ENCODE measurements at regions of chr6 and their contacts with region 1.

Region 1: DNA sequence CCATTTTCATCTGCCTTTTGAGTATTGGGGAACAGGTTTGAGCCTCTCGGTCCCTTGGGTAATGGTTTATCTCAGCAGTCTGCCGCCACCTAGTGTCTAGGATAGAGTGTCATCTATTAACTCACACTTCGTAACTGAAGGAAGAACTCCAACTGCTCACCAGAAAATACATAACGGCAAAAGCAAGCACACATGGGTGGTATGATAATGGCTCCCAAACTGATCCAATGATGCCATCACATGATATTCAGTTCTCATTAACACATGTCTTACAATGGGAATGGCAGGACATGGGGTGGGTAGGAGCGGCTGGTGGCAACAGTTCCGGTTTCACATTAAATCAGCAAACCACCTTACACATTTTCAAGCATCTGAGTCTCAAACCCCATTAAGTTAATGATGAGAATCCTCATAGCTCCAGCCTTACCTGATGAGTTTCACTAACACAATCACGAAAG is 110.7 kb upstream of the PHACTR1 start:
- DNase-seq: peak in 1 of 2 donors; percentile 26
- H3K4me3 ChIP-seq: no peak overlapping the region
- H3K27ac ChIP-seq: no peak overlapping the region
- H3K4me1 ChIP-seq: peaks cover 0 to 36% (median 22%) of the 10 kb centered on the region in 4 donors
- H3K27me3 ChIP-seq: no peaks in the 10 kb centered on the region
- CTCF ChIP-seq: peak; percentile 56 to 63

Region 2: DNA sequence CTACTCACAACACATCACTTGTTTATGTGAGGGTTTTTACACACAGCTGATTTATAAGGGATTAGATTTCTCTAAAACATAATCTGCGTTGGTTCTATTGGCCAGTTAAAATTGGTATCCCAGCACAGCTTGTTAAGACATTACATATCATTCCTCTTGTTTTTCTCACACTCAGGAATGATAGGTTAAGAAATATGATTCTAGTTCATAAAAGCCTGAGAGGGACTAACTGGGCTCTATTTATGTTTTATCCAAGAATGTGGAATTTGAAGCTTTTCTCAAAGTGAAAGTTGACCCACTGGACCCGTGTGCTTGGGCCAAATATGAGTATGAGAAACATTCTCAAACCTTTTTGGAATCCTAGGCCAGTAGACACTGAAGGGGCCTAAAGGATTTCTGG is 951.0 kb before region 1 on chr6:
- intact Hi-C with region 1: loop called (anchors 5 kb)
- DNase-seq: no peak
- H3K4me3 ChIP-seq: no peak overlapping the region
- H3K27ac ChIP-seq: peak overlapping the region; percentile 31 to 36
- H3K4me1 ChIP-seq: peaks cover 0 to 26% (median 9%) of the 10 kb centered on the region in 4 donors
- H3K27me3 ChIP-seq: no peaks in the 10 kb centered on the region
- CTCF ChIP-seq: no peak

Region 3: GRCh38 chr6:12289933-12290820 is 315.7 kb before region 1 on chr6 and contains the start of gene EDN1:
- intact Hi-C with region 1: loop called (anchors 5 kb)
- DNase-seq: peak; percentile 77 to 87
- H3K4me3 ChIP-seq: peak within 1 kb of the TSS; percentile 54 to 55
- H3K27ac ChIP-seq: peak within 1 kb of the TSS; percentile 50 to 76
- H3K4me1 ChIP-seq: peaks cover 0 to 60% (median 44%) of the 10 kb centered on the region in 4 donors
- H3K27me3 ChIP-seq: no peaks in the 10 kb centered on the region
- CTCF ChIP-seq: peak; percentile 57 to 59

Region 4: DNA sequence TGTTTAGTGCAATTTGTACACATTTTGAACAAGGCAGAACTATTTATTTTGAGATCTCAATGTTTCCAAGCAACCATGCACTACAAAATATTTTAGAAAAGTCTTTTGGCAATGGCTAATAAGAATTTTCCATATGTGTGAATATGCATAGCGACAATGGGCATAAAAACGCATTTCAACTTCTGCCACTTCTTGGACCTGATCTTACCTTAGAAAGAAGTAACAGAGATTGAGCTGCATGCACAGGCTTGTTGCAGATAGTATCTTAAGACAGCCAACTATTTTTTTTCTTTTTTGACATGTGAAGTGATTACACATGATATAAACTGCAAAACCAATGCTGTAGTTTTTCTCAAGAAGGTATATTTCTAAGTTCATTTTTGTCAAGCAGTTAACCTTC is 99.8 kb before region 1 on chr6:
- intact Hi-C with region 1: no loop called
- DNase-seq: no peak
- H3K4me3 ChIP-seq: no peak overlapping the region
- H3K27ac ChIP-seq: no peak overlapping the region
- H3K4me1 ChIP-seq: peaks cover 0 to 28% (median 5%) of the 10 kb centered on the region in 4 donors
- H3K27me3 ChIP-seq: no peaks in the 10 kb centered on the region
- CTCF ChIP-seq: no peak

Region 5: GRCh38 chr6:13302751-13303667 is 697.1 kb after region 1 on chr6:
- intact Hi-C with region 1: no loop called
- DNase-seq: peak; percentile 76 to 86
- H3K4me3 ChIP-seq: peak overlapping the region; percentile 34
- H3K27ac ChIP-seq: peak overlapping the region; percentile 81 to 89
- H3K4me1 ChIP-seq: peaks cover 0 to 32% (median 23%) of the 10 kb centered on the region in 4 donors
- H3K27me3 ChIP-seq: no peaks in the 10 kb centered on the region
- CTCF ChIP-seq: no peak

Measured in tibial artery (tissue), 4 donors.